Activated CD4-positive, alpha-beta memory T cell treated with anti-CD3 and anti-CD28 coated beads for 36 hours (primary cell): ENCODE measurements at regions of chr19 and their contacts with region 1.

Region 1: GRCh38 chr19:51473009-51473707 is 5.2 kb upstream of the CEACAM18 start:
- DNase-seq: peak; percentile 89
- H3K4me3 Mint-ChIP-seq: no peak overlapping the region
- H3K27ac Mint-ChIP-seq: no peak overlapping the region
- H3K4me1 Mint-ChIP-seq: peaks cover 16% of the 10 kb centered on the region
- H3K27me3 Mint-ChIP-seq: peaks cover 7% of the 10 kb centered on the region

Region 2: GRCh38 chr19:51393959-51394836 is 79.0 kb before region 1 on chr19:
- CTCF ChIA-PET with region 1: interaction called, 13 read pairs
- POLR2A ChIA-PET with region 1: no interaction called
- intact Hi-C with region 1: loop called (anchors 2 kb)
- DNase-seq: peak; percentile 98
- H3K4me3 Mint-ChIP-seq: peak overlapping the region; percentile 84
- H3K27ac Mint-ChIP-seq: peak overlapping the region; percentile 92
- H3K4me1 Mint-ChIP-seq: peaks cover 29% of the 10 kb centered on the region
- H3K27me3 Mint-ChIP-seq: peaks cover 2% of the 10 kb centered on the region

Region 3: DNA sequence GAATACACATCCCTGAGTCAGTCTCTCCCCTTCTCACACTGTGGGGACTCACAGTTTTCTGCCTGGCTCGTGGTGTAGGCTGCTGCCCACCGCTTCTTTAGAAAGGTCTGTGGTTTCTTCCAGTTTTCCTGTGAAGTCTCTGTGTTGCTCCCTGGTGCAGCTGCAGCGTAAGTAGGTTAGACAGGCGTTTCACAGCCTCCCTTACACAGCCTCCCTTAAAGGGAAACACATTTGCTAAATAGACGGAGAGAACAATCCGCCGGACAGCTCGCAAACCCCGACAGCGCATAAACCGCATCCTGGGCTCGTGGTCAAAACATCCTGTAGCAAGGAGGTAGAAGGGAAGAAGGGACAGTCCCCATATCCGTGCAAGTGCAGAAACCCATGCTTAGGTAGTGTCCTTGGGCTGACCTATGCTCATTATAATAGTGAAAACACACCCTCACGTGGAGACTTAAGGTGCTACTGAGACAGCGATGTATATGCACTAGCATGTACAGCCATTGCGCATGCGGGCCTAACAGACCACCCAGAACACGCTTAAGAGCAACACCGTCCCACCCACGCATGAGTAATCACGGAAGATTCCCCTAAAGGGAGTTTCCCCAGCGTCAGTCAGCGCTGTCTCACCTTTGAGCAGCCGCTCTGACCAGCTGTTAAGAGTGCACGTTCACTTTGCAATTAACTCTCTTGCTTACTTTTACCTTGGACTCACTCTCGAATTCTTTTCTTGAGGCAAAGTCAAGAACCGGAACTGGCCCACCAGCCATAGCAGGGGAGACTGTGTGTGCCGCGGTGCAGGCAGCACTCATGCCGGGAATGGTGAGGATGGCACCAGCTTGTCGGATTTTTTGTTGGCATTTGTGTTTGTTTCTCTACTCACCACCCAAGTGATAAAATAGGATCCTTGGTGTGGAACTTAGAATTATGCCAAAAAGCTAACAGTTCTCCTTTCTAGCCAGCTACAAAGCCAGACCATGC is 31.5 kb before region 1 on chr19:
- CTCF ChIA-PET with region 1: interaction called, 40 read pairs
- POLR2A ChIA-PET with region 1: no interaction called
- intact Hi-C with region 1: no loop called
- DNase-seq: peak; percentile 97
- H3K4me3 Mint-ChIP-seq: peak overlapping the region; percentile 81
- H3K27ac Mint-ChIP-seq: peak overlapping the region; percentile 97
- H3K4me1 Mint-ChIP-seq: peaks cover 60% of the 10 kb centered on the region
- H3K27me3 Mint-ChIP-seq: peaks cover 2% of the 10 kb centered on the region

Region 4: DNA sequence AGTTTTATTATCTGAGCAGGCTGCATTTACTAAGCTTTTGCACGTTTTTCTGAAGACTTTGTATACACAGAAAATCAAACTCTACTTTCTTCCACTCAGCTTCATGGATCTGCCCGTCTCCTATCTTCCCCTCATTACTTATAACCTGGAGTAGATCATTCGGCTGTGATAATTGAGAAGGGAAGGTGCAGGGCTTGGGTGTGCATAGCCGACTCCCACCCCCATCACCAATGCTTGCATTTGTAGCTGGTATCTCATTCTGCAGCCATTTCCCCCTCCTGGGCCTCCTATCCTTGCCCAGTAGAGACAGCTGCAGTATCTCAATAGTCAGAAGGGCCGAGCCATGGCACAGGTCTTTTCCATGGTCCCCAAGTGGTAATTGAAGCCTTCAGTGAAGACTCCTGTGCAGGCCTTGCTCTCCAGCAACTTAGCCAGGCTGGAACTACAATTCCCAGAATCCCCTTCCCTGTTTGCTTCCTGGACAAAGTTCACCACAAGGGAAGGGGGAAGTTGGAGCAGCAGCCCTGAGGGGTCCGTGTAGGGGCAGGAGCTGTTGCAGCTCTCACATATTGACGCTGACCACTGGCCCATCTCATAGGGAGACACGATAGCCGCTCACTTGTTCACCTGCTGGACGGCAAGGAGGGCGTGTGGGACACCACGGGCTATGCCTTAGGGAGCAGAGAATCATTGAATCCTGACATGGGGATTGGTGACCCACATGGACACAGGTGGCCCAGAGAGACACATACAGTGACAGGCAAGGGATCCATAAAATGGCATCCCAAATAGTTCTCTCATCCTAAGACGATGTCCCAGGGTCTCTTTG is 12.8 kb before region 1 on chr19:
- CTCF ChIA-PET with region 1: interaction called, 25 read pairs
- POLR2A ChIA-PET with region 1: no interaction called
- intact Hi-C with region 1: no loop called
- DNase-seq: no peak
- H3K4me3 Mint-ChIP-seq: no peak overlapping the region
- H3K27ac Mint-ChIP-seq: no peak overlapping the region
- H3K4me1 Mint-ChIP-seq: peaks cover 18% of the 10 kb centered on the region
- H3K27me3 Mint-ChIP-seq: peaks cover 31% of the 10 kb centered on the region

Region 5: GRCh38 chr19:51514866-51515481 is 41.8 kb after region 1 on chr19:
- CTCF ChIA-PET with region 1: interaction called, 150 read pairs
- POLR2A ChIA-PET with region 1: no interaction called
- intact Hi-C with region 1: loop called (anchors 1 kb)
- DNase-seq: peak; percentile 28
- H3K4me3 Mint-ChIP-seq: no peak overlapping the region
- H3K27ac Mint-ChIP-seq: no peak overlapping the region
- H3K4me1 Mint-ChIP-seq: peaks cover 12% of the 10 kb centered on the region
- H3K27me3 Mint-ChIP-seq: peaks cover 25% of the 10 kb centered on the region

Region 6: DNA sequence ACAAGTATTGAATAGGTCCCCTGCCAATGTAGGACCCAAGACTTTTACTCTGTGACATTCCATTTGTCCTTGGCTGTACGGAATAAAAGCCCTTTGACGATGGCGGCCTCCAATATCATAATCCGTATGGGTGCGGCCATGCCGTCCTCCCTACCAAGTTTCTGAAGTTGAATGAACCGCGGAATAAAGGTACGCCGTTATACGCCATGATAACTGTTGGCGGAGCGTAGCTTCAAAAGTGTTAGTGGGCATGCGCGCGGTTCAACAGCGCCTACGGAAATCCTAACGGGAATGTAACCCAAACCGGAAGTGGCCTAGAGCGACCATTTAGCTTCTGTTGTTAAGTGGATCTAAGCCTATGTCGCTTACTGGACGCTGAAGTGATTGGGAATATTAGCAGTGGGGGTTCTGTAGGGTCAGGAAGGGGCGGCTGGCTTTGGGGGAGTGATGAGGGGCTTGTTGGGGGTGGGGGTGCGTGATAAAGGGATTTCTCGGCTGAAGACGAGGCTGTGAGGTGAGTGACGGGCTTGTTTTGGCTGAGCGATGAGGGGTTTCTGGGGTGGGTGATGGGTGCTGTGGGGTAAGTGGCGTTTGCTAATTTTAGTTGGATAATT is 97.9 kb after region 1 on chr19 and contains the start of gene ZNF175:
- CTCF ChIA-PET with region 1: interaction called, 3 read pairs
- POLR2A ChIA-PET with region 1: no interaction called
- intact Hi-C with region 1: loop called (anchors 10 kb)
- DNase-seq: peak; percentile 92
- H3K4me3 Mint-ChIP-seq: peak within 1 kb of the TSS; percentile 86
- H3K27ac Mint-ChIP-seq: peak within 1 kb of the TSS; percentile 70
- H3K4me1 Mint-ChIP-seq: peaks cover 30% of the 10 kb centered on the region
- H3K27me3 Mint-ChIP-seq: peaks cover 4% of the 10 kb centered on the region
- total RNA-seq, gene ZNF175: 7.1 to 7.9 TPM

Region 7: GRCh38 chr19:51660975-51661600 is 187.9 kb after region 1 on chr19:
- CTCF ChIA-PET with region 1: interaction called, 69 read pairs
- POLR2A ChIA-PET with region 1: no interaction called
- intact Hi-C with region 1: loop called (anchors 2 kb)
- DNase-seq: peak; percentile 80
- H3K4me3 Mint-ChIP-seq: no peak overlapping the region
- H3K27ac Mint-ChIP-seq: no peak overlapping the region
- H3K4me1 Mint-ChIP-seq: peaks cover 5% of the 10 kb centered on the region
- H3K27me3 Mint-ChIP-seq: peaks cover 15% of the 10 kb centered on the region

Region 8: DNA sequence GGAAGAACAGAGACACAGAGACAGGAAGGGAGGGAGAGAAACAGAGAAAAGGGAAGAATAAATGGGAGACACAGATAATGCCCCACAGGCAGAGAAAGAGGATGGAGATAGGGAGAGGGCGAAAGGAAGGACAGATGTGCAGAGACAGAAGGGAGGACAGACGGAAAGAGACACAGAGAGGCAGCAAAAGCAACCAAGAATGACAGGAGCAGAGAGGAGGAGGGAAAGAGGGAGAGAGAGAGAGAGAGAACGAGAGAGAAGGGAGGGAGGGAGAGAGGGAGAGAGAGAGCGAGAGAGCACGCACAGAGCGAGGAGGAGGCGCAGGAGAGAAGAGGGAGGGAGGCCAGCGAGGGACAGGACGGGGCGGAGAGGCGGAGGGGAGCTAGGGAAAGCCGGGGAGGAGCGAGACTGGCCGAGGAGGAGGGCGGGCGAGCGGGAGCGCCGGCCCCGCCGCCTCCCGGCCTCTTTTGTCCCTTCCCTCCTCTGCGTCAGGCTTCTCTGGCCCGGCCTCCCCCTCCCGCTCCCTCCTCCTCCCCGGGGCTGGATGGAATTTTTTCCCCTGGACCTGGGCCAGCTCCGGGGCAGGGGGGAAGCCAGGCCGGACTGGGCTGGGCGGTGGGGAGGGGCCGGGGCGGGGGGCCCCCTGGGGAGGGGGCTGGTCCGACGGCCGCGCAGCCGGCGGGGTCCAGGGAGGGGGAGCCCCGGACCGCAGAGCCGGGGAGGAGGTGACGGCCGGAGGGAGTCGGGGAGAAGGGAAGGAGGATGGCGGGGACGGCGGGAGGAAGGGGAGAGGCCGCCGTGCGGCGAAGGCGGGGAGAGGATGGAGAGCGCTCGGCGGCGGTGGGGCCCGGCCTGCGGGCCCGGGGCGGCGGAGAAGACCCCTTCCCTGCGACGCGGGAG is 215.8 kb after region 1 on chr19:
- CTCF ChIA-PET with region 1: no interaction called
- POLR2A ChIA-PET with region 1: no interaction called
- intact Hi-C with region 1: no loop called
- DNase-seq: peak; percentile 44
- H3K4me3 Mint-ChIP-seq: peak overlapping the region; percentile 65
- H3K27ac Mint-ChIP-seq: peak overlapping the region; percentile 40
- H3K4me1 Mint-ChIP-seq: peaks cover 11% of the 10 kb centered on the region
- H3K27me3 Mint-ChIP-seq: no peaks in the 10 kb centered on the region